HepG2 (cell line): ENCODE measurements at regions of chr6 and their contacts with region 1.

Region 1: GRCh38 chr6:129709769-129710449 is at the start of gene ARHGAP18:
- DNase-seq: peak; percentile 97
- ATAC-seq: peak; percentile 97
- H3K4me3 ChIP-seq: peak within 1 kb of the TSS; percentile 67 to 84 (median 78)
- H3K27ac ChIP-seq: peak within 1 kb of the TSS; percentile 68
- H3K4me1 ChIP-seq: peaks cover 46% of the 10 kb centered on the region
- H3K27me3 ChIP-seq: no peaks in the 10 kb centered on the region; a peak in 1 of 5 replicates
- CTCF ChIP-seq: 0 out of 2 replicates have a peak, but pooled peaks have one; percentile 25
- EP300 ChIP-seq: peak in 1 of 2 experiments; percentile 63; a peak in 2 of 4 replicates
- POLR2A ChIP-seq: peak; percentile 92 to 98
- RAD21 ChIP-seq: peak; percentile 16; the same call in 1 of the 2 replicates
- total RNA-seq, gene ARHGAP18: 115 and 183 TPM in 2 replicates

Region 2: GRCh38 chr6:129638055-129638691 is 71.7 kb before region 1 on chr6:
- CTCF ChIA-PET with region 1: no interaction called
- POLR2A ChIA-PET with region 1: interaction called, 16 read pairs
- in situ Hi-C with region 1: no loop called
- intact Hi-C with region 1: loop called (anchors 5 kb)
- DNase-seq: peak; percentile 85
- ATAC-seq: peak; percentile 90
- H3K4me3 ChIP-seq: peak overlapping the region in 1 of 3 experiments; percentile 1; a peak in 1 of 6 replicates
- H3K27ac ChIP-seq: peak overlapping the region; percentile 66
- H3K4me1 ChIP-seq: peaks cover 57% of the 10 kb centered on the region
- H3K27me3 ChIP-seq: no peaks in the 10 kb centered on the region
- CTCF ChIP-seq: no peak
- EP300 ChIP-seq: no peak; a peak in 1 of 4 replicates
- POLR2A ChIP-seq: no peak
- RAD21 ChIP-seq: no peak

Region 3: DNA sequence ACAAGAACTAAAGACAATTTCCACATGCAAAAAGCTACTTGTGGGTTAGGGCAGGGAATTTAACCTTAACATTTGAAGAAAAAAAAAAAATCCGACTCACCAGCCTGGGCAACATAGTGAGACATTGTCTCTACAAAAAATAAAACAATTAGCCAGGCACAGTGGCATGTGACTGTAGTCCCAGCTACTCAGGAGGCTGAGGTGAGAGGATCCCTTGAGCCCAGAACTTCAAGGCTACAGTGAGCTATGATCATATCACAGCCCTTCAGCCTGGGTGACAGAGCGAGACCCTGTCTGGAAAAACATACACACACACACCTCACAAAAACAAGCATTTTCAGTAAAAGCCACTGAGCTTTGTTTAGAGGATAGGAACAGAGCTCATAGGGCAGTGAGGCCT is 56.2 kb before region 1 on chr6:
- CTCF ChIA-PET with region 1: no interaction called
- POLR2A ChIA-PET with region 1: interaction called, 10 read pairs
- in situ Hi-C with region 1: no loop called
- intact Hi-C with region 1: no loop called
- DNase-seq: no peak
- ATAC-seq: peak; percentile 51
- H3K4me3 ChIP-seq: no peak overlapping the region
- H3K27ac ChIP-seq: peak overlapping the region; percentile 18
- H3K4me1 ChIP-seq: peaks cover 89% of the 10 kb centered on the region
- H3K27me3 ChIP-seq: no peaks in the 10 kb centered on the region
- CTCF ChIP-seq: no peak
- EP300 ChIP-seq: no peak
- POLR2A ChIP-seq: no peak
- RAD21 ChIP-seq: no peak

Region 4: DNA sequence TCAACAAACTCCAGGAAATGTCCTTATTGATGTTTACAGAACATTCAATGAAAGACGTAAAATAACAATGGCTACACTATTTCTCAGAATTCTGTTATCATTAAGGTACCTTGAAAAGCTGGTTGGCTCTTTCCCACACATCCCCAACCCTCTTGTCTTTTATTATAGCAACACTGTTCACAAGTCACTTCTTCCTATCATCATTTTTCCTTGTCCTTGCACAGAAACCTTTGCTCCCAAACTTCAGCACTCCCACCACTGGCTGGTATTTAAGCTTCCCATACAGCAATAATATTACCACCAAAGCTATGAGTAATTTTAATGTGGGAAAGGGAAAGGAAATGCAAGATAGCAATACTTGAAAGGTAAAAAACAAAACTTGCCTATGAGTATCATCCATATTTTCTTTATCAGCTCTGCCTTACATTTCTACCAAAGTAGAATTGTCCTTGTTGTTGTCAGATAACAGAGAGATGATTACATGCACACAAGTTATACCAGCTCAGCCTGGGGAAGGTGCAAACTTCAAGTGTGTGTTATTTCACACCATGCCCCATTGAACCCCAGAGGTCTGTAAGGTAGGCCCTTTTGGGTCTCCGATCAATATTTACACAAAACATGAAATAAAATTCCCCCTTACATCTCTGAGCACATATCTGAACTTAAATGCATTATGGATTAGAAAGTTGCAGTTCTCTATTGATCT is 32.1 kb before region 1 on chr6:
- CTCF ChIA-PET with region 1: no interaction called
- POLR2A ChIA-PET with region 1: interaction called, 22 read pairs
- in situ Hi-C with region 1: no loop called
- intact Hi-C with region 1: no loop called
- DNase-seq: no peak
- ATAC-seq: peak; percentile 65
- H3K4me3 ChIP-seq: no peak overlapping the region
- H3K27ac ChIP-seq: peak overlapping the region; percentile 53
- H3K4me1 ChIP-seq: peaks cover 97% of the 10 kb centered on the region
- H3K27me3 ChIP-seq: no peaks in the 10 kb centered on the region
- CTCF ChIP-seq: no peak
- EP300 ChIP-seq: peak in 1 of 2 experiments; percentile 61; a peak in 1 of 4 replicates
- POLR2A ChIP-seq: no peak
- RAD21 ChIP-seq: no peak

Region 5: GRCh38 chr6:129695373-129696027 is 14.4 kb before region 1 on chr6:
- CTCF ChIA-PET with region 1: no interaction called
- POLR2A ChIA-PET with region 1: interaction called, 96 read pairs
- in situ Hi-C with region 1: no loop called
- intact Hi-C with region 1: loop called (anchors 2 kb)
- DNase-seq: peak; percentile 92
- ATAC-seq: peak; percentile 87
- H3K4me3 ChIP-seq: peak overlapping the region; percentile 30 to 57 (median 43); a peak in 5 of 6 replicates
- H3K27ac ChIP-seq: peak overlapping the region; percentile 89
- H3K4me1 ChIP-seq: peaks cover 100% of the 10 kb centered on the region
- H3K27me3 ChIP-seq: no peaks in the 10 kb centered on the region
- CTCF ChIP-seq: no peak
- EP300 ChIP-seq: peak; percentile 50 to 95; a peak in 2 of 4 replicates
- POLR2A ChIP-seq: no peak
- RAD21 ChIP-seq: 0 out of 2 replicates have a peak, but pooled peaks have one; percentile 20